ENCODE measurements at regions of chr9 and their contacts with region 1.

Region 1: DNA sequence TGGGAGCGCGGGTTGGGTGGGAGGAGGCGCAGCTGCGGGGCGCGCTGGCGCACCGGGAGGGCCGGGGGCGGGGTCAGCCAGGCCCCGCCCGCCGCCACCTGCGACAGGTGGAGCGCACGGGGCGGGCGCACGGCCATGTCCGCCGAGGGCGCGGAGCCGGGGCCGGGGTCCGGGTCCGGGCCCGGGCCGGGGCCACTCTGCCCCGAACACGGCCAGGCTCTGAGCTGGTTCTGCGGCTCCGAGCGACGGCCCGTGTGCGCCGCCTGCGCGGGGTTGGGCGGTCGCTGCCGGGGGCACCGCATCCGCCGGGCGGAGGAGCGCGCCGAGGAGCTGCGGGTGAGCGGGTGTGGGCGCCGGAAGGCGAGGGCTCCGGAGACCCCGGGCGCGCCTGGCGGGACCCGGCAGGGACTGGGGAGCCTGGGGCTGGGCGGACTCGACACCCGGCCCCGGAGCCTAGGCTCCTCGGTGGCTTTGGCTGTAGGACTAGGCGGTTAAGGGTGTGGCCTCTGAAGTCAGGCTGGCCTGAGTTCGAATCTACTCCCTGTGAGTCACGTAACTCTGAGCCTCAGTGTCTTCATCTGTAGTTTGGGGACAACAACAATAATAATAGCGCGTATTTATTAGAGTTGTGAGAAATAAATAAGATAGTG is at the start of gene BSPRY:
- DNase-seq: peak; percentile 48
- ATAC-seq: peak; percentile 42
- H3K4me3 Mint-ChIP-seq: peak within 1 kb of the TSS; percentile 75
- H3K27ac Mint-ChIP-seq: peak within 1 kb of the TSS; percentile 71
- H3K4me1 Mint-ChIP-seq: peaks cover 48% of the 10 kb centered on the region
- H3K27me3 Mint-ChIP-seq: peaks cover 37% of the 10 kb centered on the region
- total RNA-seq, gene BSPRY: 5.7 to 6.6 TPM

Region 2: GRCh38 chr9:112887381-112887780 is 462.2 kb before region 1 on chr9:
- CTCF ChIA-PET with region 1: no interaction called
- POLR2A ChIA-PET with region 1: no interaction called
- intact Hi-C with region 1: no loop called
- DNase-seq: peak; percentile 38
- ATAC-seq: no peak
- H3K4me3 Mint-ChIP-seq: no peak overlapping the region
- H3K27ac Mint-ChIP-seq: no peak overlapping the region
- H3K4me1 Mint-ChIP-seq: no peaks in the 10 kb centered on the region
- H3K27me3 Mint-ChIP-seq: peaks cover 22% of the 10 kb centered on the region

Region 3: GRCh38 chr9:112898872-112899311 is 450.7 kb before region 1 on chr9:
- CTCF ChIA-PET with region 1: no interaction called
- POLR2A ChIA-PET with region 1: no interaction called
- intact Hi-C with region 1: no loop called
- DNase-seq: no peak
- ATAC-seq: no peak
- H3K4me3 Mint-ChIP-seq: no peak overlapping the region
- H3K27ac Mint-ChIP-seq: no peak overlapping the region
- H3K4me1 Mint-ChIP-seq: peaks cover 5% of the 10 kb centered on the region
- H3K27me3 Mint-ChIP-seq: peaks cover 32% of the 10 kb centered on the region

Region 4: GRCh38 chr9:113150670-113151611 is 198.6 kb before region 1 on chr9 and contains the start of gene SLC31A2:
- CTCF ChIA-PET with region 1: interaction called, 3 read pairs
- POLR2A ChIA-PET with region 1: no interaction called
- intact Hi-C with region 1: loop called in 1 of 2 experiments (anchors 5 kb)
- DNase-seq: peak; percentile 95
- ATAC-seq: peak; percentile 97
- H3K4me3 Mint-ChIP-seq: peak within 1 kb of the TSS; percentile 73
- H3K27ac Mint-ChIP-seq: peak within 1 kb of the TSS; percentile 51
- H3K4me1 Mint-ChIP-seq: peaks cover 29% of the 10 kb centered on the region
- H3K27me3 Mint-ChIP-seq: peaks cover 2% of the 10 kb centered on the region
- total RNA-seq, gene SLC31A2: 2.7 to 3.2 TPM

Region 5: DNA sequence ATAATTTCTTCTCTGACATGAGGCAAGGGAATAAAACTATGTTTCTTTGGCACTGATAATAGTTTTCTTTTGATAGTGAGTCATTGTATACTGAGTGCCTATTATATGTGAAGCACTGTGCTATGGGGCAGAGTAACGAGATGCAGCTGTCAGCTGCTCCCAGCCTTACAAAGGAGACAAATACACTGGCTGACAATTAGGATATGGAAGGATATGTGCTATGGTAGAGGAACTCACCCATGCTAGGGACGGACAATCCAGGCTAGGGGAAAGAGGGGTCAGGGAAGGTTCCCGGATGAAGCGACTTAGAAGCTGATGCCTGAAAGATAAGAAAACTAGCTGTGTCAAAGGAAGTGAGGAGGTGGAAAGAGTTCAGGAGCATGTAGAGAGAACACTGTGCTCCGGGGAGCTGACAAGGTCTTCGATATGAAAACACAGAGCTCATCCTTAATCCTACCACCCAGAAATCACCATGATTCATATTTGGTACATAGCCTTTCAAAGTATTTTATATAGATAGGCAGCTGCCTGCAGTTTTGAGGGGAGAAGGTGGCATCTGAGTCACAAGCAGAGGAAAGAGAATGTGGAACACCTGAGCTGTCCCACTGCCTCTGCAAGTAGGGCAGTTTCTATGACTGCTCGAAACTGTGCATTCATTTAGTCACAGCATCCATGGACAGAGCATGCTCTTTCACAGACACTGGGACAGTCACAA is 11.9 kb after region 1 on chr9:
- CTCF ChIA-PET with region 1: interaction called, 9 read pairs
- POLR2A ChIA-PET with region 1: interaction called, 6 read pairs
- intact Hi-C with region 1: loop called in 1 of 2 experiments (anchors 1 kb)
- DNase-seq: peak; percentile 65
- ATAC-seq: peak; percentile 97
- H3K4me3 Mint-ChIP-seq: no peak overlapping the region
- H3K27ac Mint-ChIP-seq: no peak overlapping the region
- H3K4me1 Mint-ChIP-seq: peaks cover 14% of the 10 kb centered on the region
- H3K27me3 Mint-ChIP-seq: peaks cover 7% of the 10 kb centered on the region

Region 6: DNA sequence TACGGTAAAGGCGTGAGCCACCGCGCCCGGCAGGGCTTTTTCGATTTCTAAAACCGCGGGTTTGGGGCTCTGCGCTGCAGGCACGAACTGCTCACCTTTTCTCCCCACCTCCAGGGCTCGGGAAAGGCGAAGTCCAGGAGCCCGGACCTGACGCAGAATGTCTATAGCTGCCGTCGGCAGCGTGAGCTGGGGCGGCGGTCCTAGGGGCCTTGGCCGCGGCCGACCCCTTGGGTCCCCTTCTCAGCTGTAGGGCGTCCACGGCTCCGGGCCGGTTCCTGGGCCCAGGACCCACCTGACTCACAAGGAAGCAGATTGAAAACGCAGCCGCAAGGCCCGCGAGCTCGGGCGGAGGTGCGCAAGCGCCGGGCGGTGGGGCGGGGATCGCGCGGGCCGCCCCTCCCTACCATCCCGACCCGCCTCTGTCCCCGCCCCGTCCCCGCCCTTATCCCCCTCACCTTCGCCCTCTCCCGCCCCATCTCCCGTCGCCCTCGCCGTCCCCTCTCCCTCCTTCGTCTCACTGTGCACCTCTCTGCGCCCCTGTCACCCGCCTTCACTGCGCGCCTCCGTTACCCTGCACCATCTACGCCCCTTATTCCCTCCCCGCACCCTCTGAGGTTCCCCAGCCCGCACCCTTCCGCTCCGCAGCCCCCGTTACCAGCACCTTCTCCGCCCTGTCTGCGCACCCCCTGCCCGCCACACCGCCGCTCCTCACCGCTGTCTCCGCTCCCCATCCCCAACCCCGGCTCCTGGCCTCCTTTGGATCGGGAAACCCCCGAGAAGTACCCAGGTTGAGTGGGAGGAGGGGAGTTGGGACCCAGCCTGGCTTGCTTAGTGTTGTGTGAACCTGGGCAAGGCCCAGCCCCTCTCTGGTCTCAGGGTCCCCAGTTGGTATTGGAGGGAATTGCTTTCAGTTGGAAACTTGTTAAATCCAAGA is 27.3 kb after region 1 on chr9 and contains the start of gene HDHD3:
- CTCF ChIA-PET with region 1: interaction called, 4 read pairs
- POLR2A ChIA-PET with region 1: no interaction called
- intact Hi-C with region 1: loop called (anchors 1 to 5 kb)
- DNase-seq: peak; percentile 90
- ATAC-seq: peak; percentile 89
- H3K4me3 Mint-ChIP-seq: peak within 1 kb of the TSS; percentile 88
- H3K27ac Mint-ChIP-seq: peak within 1 kb of the TSS; percentile 89
- H3K4me1 Mint-ChIP-seq: peaks cover 17% of the 10 kb centered on the region
- H3K27me3 Mint-ChIP-seq: no peaks in the 10 kb centered on the region
- total RNA-seq, gene HDHD3: 12.7 to 16.5 TPM

Measured in activated CD4-positive, alpha-beta T cell treated with anti-CD3 and anti-CD28 coated beads for 36 hours (primary cell).